ENCODE measurements at regions of chr3 and their contacts with region 1.

Region 1: GRCh38 chr3:84547971-84548970 is 410.5 kb upstream of the CADM2 start:
- DNase-seq: no peak
- H3K4me3 ChIP-seq: peak overlapping the region in 1 of 2 donors; percentile 1
- H3K27ac ChIP-seq: no peak overlapping the region
- H3K4me1 ChIP-seq: no peaks in the 10 kb centered on the region
- H3K27me3 ChIP-seq: no peaks in the 10 kb centered on the region
- CTCF ChIP-seq: peak in 2 of 3 experiments; percentile 19 to 41

Region 2: GRCh38 chr3:84299329-84299728 is 248.9 kb before region 1 on chr3:
- intact Hi-C with region 1: no loop called
- DNase-seq: no peak
- H3K4me3 ChIP-seq: no peak overlapping the region
- H3K27ac ChIP-seq: no peak overlapping the region
- H3K4me1 ChIP-seq: no peaks in the 10 kb centered on the region
- H3K27me3 ChIP-seq: no peaks in the 10 kb centered on the region
- CTCF ChIP-seq: no peak

Region 3: DNA sequence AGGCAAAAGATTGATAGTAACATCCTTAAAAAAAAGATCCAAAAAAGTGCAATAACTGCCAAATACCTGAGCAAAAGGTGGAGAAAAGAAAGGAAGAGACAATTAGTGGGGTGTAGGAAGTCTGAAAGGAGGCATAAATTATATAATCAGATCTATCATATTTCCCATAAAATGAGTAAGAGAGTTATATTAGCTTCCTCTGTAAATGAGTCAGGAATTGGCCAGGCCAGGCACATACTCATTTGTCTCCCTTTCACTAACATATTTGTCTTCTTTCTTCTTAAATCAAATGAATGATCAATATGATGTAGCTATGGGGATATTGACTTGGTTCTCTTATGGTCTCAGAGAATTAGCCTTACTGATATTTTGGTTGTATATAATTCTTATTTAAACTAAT is 118.2 kb after region 1 on chr3:
- intact Hi-C with region 1: no loop called
- DNase-seq: no peak
- H3K4me3 ChIP-seq: no peak overlapping the region
- H3K27ac ChIP-seq: no peak overlapping the region
- H3K4me1 ChIP-seq: no peaks in the 10 kb centered on the region
- H3K27me3 ChIP-seq: no peaks in the 10 kb centered on the region
- CTCF ChIP-seq: no peak

Region 4: DNA sequence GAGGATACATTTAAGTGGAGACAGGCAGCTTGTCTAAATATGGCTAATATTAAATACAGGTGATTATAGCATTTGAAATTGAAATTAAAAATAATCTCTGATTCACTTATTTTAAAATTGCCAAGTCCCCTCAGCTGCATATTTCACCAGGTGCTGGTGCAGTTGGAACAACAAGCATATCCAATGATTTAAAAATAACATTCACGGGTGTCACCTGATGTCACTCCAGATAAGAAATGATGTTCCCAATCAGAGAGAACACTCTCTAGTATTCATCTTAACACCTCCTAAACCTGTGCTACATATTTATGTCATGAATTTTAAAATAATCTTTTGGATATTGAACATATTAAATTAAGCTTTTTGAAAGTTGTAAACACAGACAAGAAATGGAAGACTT is 660.4 kb after region 1 on chr3:
- intact Hi-C with region 1: no loop called
- DNase-seq: no peak
- H3K4me3 ChIP-seq: no peak overlapping the region
- H3K27ac ChIP-seq: no peak overlapping the region
- H3K4me1 ChIP-seq: no peaks in the 10 kb centered on the region
- H3K27me3 ChIP-seq: no peaks in the 10 kb centered on the region
- CTCF ChIP-seq: no peak

Region 5: GRCh38 chr3:85576091-85576690 is 1027.9 kb after region 1 on chr3:
- intact Hi-C with region 1: loop called (anchors 5 kb)
- DNase-seq: peak in 1 of 2 donors; percentile 69
- H3K4me3 ChIP-seq: no peak overlapping the region
- H3K27ac ChIP-seq: no peak overlapping the region
- H3K4me1 ChIP-seq: no peaks in the 10 kb centered on the region
- H3K27me3 ChIP-seq: no peaks in the 10 kb centered on the region
- CTCF ChIP-seq: peak in 2 of 3 experiments; percentile 73 to 84

Measured in ascending aorta (tissue), 2 donors.